ENCODE measurements at regions of chr2 and their contacts with region 1.

Region 1: GRCh38 chr2:202870431-202871299 is 901 bp downstream of the ICA1L start:
- DNase-seq: peak; percentile 75
- H3K4me3 ChIP-seq: peak overlapping the region; percentile 84
- H3K27ac ChIP-seq: peak overlapping the region; percentile 76
- H3K4me1 ChIP-seq: peaks cover 5% of the 10 kb centered on the region
- H3K27me3 ChIP-seq: no peaks in the 10 kb centered on the region
- CTCF ChIP-seq: peak; percentile 71

Region 2: GRCh38 chr2:202574541-202574940 is 296.1 kb before region 1 on chr2:
- CTCF ChIA-PET with region 1: no interaction called
- POLR2A ChIA-PET with region 1: no interaction called
- intact Hi-C with region 1: no loop called
- DNase-seq: no peak
- H3K4me3 ChIP-seq: no peak overlapping the region
- H3K27ac ChIP-seq: no peak overlapping the region
- H3K4me1 ChIP-seq: no peaks in the 10 kb centered on the region
- H3K27me3 ChIP-seq: no peaks in the 10 kb centered on the region
- CTCF ChIP-seq: no peak

Region 3: DNA sequence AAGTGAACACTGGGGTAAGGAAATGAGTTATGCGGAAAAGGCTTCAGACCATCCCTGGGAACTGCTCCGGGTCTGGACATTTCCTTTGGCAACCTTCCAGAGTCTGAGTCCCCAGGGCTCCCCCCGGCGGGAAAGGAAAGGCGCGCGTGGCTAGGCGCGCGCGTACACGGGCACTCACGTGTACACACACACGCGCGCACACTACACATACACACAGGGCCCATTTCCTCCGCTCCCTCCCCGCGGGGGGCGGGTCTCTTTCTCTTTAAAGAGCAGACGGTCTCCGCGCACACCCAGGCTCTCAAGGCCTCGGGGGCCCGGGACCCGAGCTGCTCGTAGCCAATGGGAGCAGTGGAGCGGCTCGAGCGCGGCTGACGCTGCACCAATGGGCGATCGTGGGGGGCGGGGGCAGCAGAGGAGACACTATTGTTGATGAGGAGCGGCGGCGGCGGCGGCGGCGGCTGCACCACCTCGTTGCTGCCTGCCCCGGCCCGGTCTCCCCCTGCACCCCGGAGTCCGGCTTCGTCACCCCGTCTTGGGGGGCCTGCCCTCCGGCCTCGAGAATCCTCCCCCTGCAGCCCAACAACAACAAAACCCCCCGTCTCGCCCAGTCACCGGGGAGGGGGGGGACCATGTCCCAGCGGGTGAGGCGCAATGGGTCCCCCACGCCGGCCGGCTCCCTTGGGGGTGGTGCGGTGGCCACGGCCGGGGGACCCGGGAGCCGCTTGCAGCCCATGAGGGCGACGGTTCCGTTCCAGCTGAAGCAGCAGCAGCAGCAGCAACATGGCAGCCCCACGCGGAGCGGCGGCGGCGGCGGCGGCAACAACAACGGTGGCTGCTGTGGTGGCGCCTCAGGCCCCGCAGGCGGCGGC is 235.9 kb before region 1 on chr2 and contains the start of gene FAM117B:
- CTCF ChIA-PET with region 1: no interaction called
- POLR2A ChIA-PET with region 1: no interaction called
- intact Hi-C with region 1: loop called (anchors 5 kb)
- DNase-seq: peak; percentile 99
- H3K4me3 ChIP-seq: peak within 1 kb of the TSS; percentile 94
- H3K27ac ChIP-seq: peak within 1 kb of the TSS; percentile 88
- H3K4me1 ChIP-seq: no peaks in the 10 kb centered on the region
- H3K27me3 ChIP-seq: no peaks in the 10 kb centered on the region
- CTCF ChIP-seq: no peak
- total RNA-seq, gene FAM117B: 13.3 and 14.2 TPM in 2 replicates

Region 4: GRCh38 chr2:203743441-203743981 is 872.8 kb after region 1 on chr2:
- CTCF ChIA-PET with region 1: no interaction called
- POLR2A ChIA-PET with region 1: no interaction called
- intact Hi-C with region 1: no loop called
- DNase-seq: no peak
- H3K4me3 ChIP-seq: no peak overlapping the region
- H3K27ac ChIP-seq: no peak overlapping the region
- H3K4me1 ChIP-seq: no peaks in the 10 kb centered on the region
- H3K27me3 ChIP-seq: no peaks in the 10 kb centered on the region
- CTCF ChIP-seq: no peak

Measured in A673 (cell line).